AG04450 (cell line): ENCODE measurements at regions of chr3 and their contacts with region 1.

Region 1: DNA sequence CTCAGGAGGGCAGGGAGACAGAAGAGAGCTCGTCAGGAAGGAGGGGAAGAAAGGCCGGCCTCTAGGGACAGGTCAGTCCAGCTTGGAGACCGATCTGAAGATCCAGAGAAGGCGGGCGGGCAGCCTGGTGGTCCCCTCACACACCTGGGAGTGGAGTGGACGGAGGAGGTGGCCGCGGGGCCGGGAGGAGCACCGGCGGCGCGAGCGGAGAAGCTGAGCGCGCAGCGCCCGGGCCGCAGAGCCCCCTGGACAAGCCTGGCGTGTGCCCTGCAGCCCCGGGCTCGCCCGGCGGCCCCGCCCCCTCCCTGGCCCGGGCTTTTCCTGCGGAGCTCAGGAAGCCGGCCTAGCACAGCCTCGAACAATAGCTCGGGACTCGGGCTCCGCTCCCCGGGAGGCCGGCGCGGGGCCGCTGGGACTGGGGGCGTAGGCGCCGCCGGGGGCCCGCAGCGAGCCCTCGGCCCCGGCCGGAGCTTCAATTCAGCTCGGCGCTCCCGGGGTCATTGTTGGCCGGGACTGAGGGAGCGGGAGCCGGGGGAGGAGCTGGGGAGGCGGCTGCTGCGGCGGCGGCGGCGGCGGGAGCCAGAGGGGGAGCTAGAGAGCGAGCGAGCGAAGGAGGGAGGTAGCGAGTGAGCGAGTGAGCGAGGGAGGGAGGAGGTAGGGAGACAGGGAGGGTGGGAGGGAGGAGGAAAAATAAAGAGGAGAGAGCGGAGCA is 40.9 kb upstream of the ROPN1 start:
- DNase-seq: peak; percentile 26
- H3K4me3 ChIP-seq: peak overlapping the region; percentile 71
- H3K27ac ChIP-seq: no peak overlapping the region
- H3K27me3 ChIP-seq: peaks cover 35% of the 10 kb centered on the region
- CTCF ChIP-seq: peak; percentile 59

Region 2: GRCh38 chr3:124007186-124007585 is 25.6 kb before region 1 on chr3:
- CTCF ChIA-PET with region 1: interaction called, 13 read pairs
- POLR2A ChIA-PET with region 1: no interaction called
- DNase-seq: no peak
- H3K4me3 ChIP-seq: no peak overlapping the region
- H3K27ac ChIP-seq: no peak overlapping the region
- H3K27me3 ChIP-seq: peaks cover 23% of the 10 kb centered on the region
- CTCF ChIP-seq: no peak

Region 3: GRCh38 chr3:124048931-124049798 is 16.4 kb after region 1 on chr3:
- CTCF ChIA-PET with region 1: interaction called, 12 read pairs
- POLR2A ChIA-PET with region 1: no interaction called
- DNase-seq: no peak
- H3K4me3 ChIP-seq: no peak overlapping the region
- H3K27ac ChIP-seq: no peak overlapping the region
- H3K27me3 ChIP-seq: peaks cover 6% of the 10 kb centered on the region
- CTCF ChIP-seq: no peak

Region 4: GRCh38 chr3:124063197-124063909 is 30.5 kb after region 1 on chr3:
- CTCF ChIA-PET with region 1: interaction called, 12 read pairs
- POLR2A ChIA-PET with region 1: no interaction called
- DNase-seq: peak; percentile 15
- H3K4me3 ChIP-seq: no peak overlapping the region
- H3K27ac ChIP-seq: no peak overlapping the region
- H3K27me3 ChIP-seq: peaks cover 10% of the 10 kb centered on the region
- CTCF ChIP-seq: no peak

Region 5: DNA sequence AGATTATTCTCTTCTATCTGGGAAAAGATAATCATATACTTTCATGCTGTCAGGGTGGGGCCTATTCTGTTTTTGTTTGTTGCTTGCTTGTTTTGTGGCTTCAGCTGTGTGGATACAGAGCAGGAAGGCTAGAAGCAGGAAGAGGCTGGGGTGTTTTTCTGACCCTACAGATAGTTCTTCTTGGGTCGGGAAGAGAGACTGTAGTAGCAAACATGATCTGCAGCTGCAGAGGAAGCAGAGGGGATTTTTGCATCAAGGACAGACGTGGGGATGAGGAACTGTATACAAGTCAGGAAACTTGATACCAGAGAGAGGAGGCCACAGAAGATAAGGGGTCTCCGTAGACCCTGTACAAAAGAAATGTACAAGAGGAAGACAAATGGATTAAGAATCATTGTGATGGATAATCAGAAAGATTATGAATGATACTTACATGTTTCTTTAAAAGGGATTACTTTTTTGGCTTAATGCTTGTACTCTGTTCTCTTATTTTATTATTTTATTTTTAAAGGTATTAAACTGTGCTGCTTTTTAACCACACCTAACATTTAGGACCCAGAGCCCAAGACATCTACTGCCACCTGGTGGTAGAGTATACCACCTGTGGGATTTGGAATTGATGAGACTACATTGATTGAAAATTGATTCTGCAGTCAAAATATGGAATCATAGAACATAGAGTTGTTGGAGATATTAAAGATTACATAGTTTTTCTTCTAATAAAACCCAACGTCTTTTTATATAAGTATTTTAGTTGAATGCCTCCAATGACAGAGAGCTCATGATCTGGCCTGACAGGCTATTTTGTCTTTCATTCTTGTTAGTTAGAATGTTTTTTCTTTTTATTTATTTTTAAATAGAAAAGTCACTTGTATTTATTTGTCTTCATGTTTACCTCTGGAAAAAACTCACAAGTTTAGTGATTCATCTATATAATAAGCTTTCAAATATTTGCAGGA is 46.4 kb after region 1 on chr3:
- CTCF ChIA-PET with region 1: interaction called, 17 read pairs
- POLR2A ChIA-PET with region 1: no interaction called
- DNase-seq: no peak
- H3K4me3 ChIP-seq: no peak overlapping the region
- H3K27ac ChIP-seq: no peak overlapping the region
- H3K27me3 ChIP-seq: peaks cover 7% of the 10 kb centered on the region
- CTCF ChIP-seq: peak; percentile 81

Region 6: DNA sequence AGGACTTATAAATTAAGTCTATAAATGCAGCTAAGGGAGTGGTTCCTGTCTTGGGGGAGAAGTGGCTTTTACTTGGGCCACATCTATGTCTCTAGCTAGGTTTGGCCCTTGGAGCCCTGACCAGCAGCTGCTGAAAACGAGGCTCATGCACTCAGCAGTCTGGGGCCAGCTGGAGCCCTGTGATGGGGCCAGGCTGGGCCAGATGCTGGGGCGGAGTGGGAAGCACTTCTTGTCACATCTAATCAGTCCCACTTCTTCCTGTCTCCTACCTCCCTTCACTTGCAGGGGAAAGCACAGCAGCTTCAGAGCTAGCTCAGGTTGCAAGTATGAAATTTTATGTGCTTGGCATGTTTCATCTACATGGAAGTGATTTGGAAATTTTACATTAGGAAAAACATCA is 169.0 kb after region 1 on chr3:
- CTCF ChIA-PET with region 1: no interaction called
- POLR2A ChIA-PET with region 1: no interaction called
- DNase-seq: no peak
- H3K4me3 ChIP-seq: no peak overlapping the region
- H3K27ac ChIP-seq: no peak overlapping the region
- H3K27me3 ChIP-seq: peaks cover 29% of the 10 kb centered on the region
- CTCF ChIP-seq: no peak

Region 7: GRCh38 chr3:124281453-124282316 is 248.9 kb after region 1 on chr3:
- CTCF ChIA-PET with region 1: interaction called, 12 read pairs
- POLR2A ChIA-PET with region 1: interaction called, 4 read pairs
- DNase-seq: no peak
- H3K4me3 ChIP-seq: no peak overlapping the region
- H3K27ac ChIP-seq: no peak overlapping the region
- H3K27me3 ChIP-seq: peaks cover 15% of the 10 kb centered on the region
- CTCF ChIP-seq: peak; percentile 70

Region 8: DNA sequence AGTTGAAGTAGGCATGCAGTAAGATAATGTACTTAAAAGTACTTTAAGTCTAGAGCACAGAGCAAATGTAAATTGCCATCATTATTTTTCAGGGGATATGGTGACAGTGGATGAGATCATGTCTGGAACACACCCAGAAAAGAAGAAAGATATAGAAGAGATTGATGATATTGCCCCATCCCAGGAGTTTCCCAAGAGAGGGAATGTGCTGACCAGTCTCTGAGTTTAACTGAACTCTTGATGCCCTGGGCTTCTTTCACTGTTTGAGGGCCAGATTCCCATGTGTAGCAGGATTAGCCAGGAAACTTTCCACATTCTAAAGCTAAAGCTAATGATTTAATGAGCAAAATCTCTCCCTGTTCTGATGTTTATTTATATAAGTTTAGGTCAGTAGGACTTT is 330.7 kb after region 1 on chr3:
- CTCF ChIA-PET with region 1: no interaction called
- POLR2A ChIA-PET with region 1: no interaction called
- DNase-seq: peak; percentile 16
- H3K4me3 ChIP-seq: no peak overlapping the region
- H3K27ac ChIP-seq: no peak overlapping the region
- H3K27me3 ChIP-seq: no peaks in the 10 kb centered on the region
- CTCF ChIP-seq: no peak